ENCODE measurements at regions of chr6 and their contacts with region 1.

Region 1: GRCh38 chr6:146857180-146857979 is 258.6 kb downstream of the ADGB start:
- DNase-seq: peak; percentile 72
- H3K4me3 Mint-ChIP-seq: no peak overlapping the region
- H3K27ac Mint-ChIP-seq: no peak overlapping the region
- H3K4me1 Mint-ChIP-seq: no peaks in the 10 kb centered on the region
- H3K27me3 Mint-ChIP-seq: no peaks in the 10 kb centered on the region
- CTCF ChIP-seq: peak; percentile 92

Region 2: GRCh38 chr6:147202516-147203312 is 345.3 kb after region 1 on chr6:
- CTCF ChIA-PET with region 1: no interaction called
- intact Hi-C with region 1: loop called (anchors 5 kb)
- DNase-seq: peak; percentile 69
- H3K4me3 Mint-ChIP-seq: peak overlapping the region; percentile 97
- H3K27ac Mint-ChIP-seq: peak overlapping the region; percentile 87
- H3K4me1 Mint-ChIP-seq: peaks cover 8% of the 10 kb centered on the region
- H3K27me3 Mint-ChIP-seq: no peaks in the 10 kb centered on the region
- CTCF ChIP-seq: no peak

Region 3: DNA sequence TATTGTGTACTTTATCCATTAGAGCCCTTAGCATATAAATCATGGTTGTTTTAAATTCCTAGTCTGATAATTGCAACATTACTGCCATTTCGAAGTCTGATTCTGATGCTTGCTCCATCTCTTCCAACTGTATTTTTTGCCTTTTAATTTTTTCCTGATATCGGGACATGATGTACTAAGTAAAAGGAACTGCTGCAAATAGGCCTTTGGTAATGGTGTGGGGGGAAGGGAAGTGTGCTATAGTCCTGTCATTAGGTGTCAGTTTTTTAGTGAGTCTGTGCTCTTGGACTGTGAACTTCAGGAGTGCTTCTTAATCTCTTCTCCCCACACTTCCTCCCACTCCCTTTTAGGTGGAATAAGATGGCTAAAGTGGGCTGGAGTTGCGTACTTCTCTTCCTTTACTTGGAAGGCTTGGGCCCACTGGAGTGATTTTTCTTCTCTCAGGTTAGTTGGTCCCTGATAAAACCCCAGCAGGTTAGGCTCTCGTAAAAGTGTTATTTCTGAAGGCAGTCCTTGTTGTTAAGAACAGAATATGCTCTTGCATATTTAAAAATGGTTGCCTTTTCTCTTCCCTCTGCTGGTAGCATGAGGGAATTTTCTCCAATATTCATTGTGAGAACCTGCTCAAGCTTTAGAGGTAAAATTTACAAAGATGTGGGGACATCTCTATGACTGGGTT is 364.9 kb after region 1 on chr6:
- CTCF ChIA-PET with region 1: no interaction called
- intact Hi-C with region 1: loop called (anchors 5 kb)
- DNase-seq: no peak
- H3K4me3 Mint-ChIP-seq: no peak overlapping the region
- H3K27ac Mint-ChIP-seq: no peak overlapping the region
- H3K4me1 Mint-ChIP-seq: no peaks in the 10 kb centered on the region
- H3K27me3 Mint-ChIP-seq: no peaks in the 10 kb centered on the region
- CTCF ChIP-seq: no peak

Region 4: GRCh38 chr6:147285087-147285855 is 427.9 kb after region 1 on chr6:
- CTCF ChIA-PET with region 1: no interaction called
- intact Hi-C with region 1: loop called (anchors 2 kb)
- DNase-seq: no peak
- H3K4me3 Mint-ChIP-seq: no peak overlapping the region
- H3K27ac Mint-ChIP-seq: no peak overlapping the region
- H3K4me1 Mint-ChIP-seq: peaks cover 10% of the 10 kb centered on the region
- H3K27me3 Mint-ChIP-seq: no peaks in the 10 kb centered on the region
- CTCF ChIP-seq: no peak